ENCODE measurements at regions of chr11 and their contacts with region 1.

Region 1: GRCh38 chr11:122209619-122210366 is 93.8 kb upstream of the BLID start:
- DNase-seq: peak in 1 of 3 donors; percentile 38
- ATAC-seq: no peak
- H3K4me3 ChIP-seq: no peak overlapping the region
- H3K4me1 ChIP-seq: no peaks in the 10 kb centered on the region
- CTCF ChIP-seq: no peak

Region 2: DNA sequence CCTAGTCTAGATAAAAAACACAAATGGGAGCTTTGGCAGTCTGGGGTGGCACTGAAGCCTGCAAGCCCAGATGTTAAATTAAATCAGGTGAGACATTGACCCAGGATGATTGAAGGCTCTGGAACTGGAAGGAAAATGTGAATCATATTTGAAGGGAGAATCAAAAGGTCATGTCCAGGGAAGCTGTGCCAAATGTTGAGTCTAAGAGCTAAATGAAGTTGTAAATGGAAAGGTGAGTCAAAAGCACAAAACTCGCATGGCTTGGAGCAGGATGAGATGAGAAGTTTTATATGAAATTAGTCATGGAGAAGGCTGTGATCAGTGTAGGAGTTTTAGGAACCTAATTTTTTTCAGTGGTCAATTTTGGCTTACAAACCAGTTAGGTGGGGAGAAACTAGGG is 394.8 kb before region 1 on chr11:
- intact Hi-C with region 1: loop called in 1 of 2 experiments (anchors 5 kb)
- DNase-seq: no peak
- ATAC-seq: no peak
- H3K4me3 ChIP-seq: no peak overlapping the region
- H3K4me1 ChIP-seq: no peaks in the 10 kb centered on the region
- CTCF ChIP-seq: no peak

Region 3: GRCh38 chr11:122505304-122506006 is 295.7 kb after region 1 on chr11:
- intact Hi-C with region 1: loop called in 1 of 2 experiments (anchors 5 kb)
- DNase-seq: peak; percentile 56 to 72 (median 61)
- ATAC-seq: peak; percentile 82
- H3K4me3 ChIP-seq: no peak overlapping the region
- H3K4me1 ChIP-seq: no peaks in the 10 kb centered on the region
- CTCF ChIP-seq: peak; percentile 53